ENCODE measurements at regions of chr4 and their contacts with region 1.

Region 1: DNA sequence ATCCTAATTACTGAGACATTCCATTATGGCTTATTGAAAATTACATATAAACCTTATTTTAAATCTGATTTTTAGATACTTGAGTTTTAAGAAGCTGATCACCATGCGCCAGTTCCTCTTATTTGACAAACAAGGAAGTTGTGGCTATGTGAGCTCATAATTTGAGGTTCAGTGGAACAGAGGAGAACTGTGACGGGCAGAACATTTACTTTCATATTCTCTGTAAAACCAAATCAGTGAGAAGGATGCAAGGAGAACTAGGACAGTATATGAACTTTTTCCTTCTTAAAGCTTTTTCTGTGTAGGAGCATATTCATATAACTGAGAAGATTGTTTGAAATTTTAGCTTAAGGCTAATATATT is 25.3 kb downstream of the STIM2 start:
- DNase-seq: peak; percentile 43
- H3K4me3 Mint-ChIP-seq: peak overlapping the region; percentile 69
- H3K27ac Mint-ChIP-seq: peak overlapping the region; percentile 91
- H3K4me1 Mint-ChIP-seq: peaks cover 77% of the 10 kb centered on the region
- H3K27me3 Mint-ChIP-seq: no peaks in the 10 kb centered on the region

Region 2: DNA sequence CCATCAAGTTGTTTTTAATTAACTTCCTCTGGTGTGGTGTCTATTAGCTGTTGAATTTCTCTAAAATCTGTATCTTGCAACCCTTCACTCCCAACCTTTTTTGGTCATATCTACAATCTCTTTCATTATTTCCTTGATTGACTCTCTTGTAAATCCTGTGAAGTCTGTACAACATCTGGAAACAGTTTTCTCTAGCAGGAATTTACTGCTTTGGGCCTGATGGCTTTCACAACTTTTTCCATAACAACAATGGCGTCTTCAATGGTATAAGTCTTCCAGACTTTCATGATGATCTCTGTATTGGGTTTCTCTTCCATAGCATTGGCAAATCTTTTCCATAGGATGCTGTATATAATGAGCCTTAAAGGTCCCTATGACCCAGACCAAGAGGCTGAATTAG is 253.0 kb before region 1 on chr4:
- intact Hi-C with region 1: no loop called
- DNase-seq: no peak
- H3K4me3 Mint-ChIP-seq: no peak overlapping the region
- H3K27ac Mint-ChIP-seq: no peak overlapping the region
- H3K4me1 Mint-ChIP-seq: no peaks in the 10 kb centered on the region
- H3K27me3 Mint-ChIP-seq: no peaks in the 10 kb centered on the region

Region 3: GRCh38 chr4:26812049-26812714 is 73.7 kb before region 1 on chr4:
- intact Hi-C with region 1: no loop called
- DNase-seq: no peak
- H3K4me3 Mint-ChIP-seq: no peak overlapping the region
- H3K27ac Mint-ChIP-seq: no peak overlapping the region
- H3K4me1 Mint-ChIP-seq: peaks cover 7% of the 10 kb centered on the region
- H3K27me3 Mint-ChIP-seq: no peaks in the 10 kb centered on the region

Region 4: DNA sequence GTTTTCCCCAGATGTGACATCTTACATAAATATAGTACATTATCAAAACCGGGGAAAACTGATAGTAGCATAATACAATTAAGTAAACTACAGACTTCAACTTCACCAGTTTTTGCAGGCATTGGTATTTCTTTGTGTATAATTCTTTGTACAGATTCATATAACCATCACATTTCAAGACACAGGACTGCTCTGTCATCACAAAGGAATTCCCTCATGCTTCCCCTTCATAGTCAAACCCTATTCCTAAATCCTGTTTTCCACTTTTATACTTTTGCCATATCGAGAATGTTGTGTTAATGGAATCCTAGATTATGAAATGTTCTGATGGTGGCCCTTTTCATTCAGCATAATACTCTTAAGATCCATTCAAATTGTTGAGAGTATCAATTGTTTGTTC is 10.7 kb after region 1 on chr4:
- intact Hi-C with region 1: loop called (anchors 1 kb)
- DNase-seq: no peak
- H3K4me3 Mint-ChIP-seq: no peak overlapping the region
- H3K27ac Mint-ChIP-seq: no peak overlapping the region
- H3K4me1 Mint-ChIP-seq: peaks cover 49% of the 10 kb centered on the region
- H3K27me3 Mint-ChIP-seq: no peaks in the 10 kb centered on the region

Region 5: GRCh38 chr4:26959654-26960047 is 73.8 kb after region 1 on chr4:
- intact Hi-C with region 1: loop called (anchors 1 kb)
- DNase-seq: no peak
- H3K4me3 Mint-ChIP-seq: no peak overlapping the region
- H3K27ac Mint-ChIP-seq: peak overlapping the region; percentile 18
- H3K4me1 Mint-ChIP-seq: peaks cover 46% of the 10 kb centered on the region
- H3K27me3 Mint-ChIP-seq: no peaks in the 10 kb centered on the region

Region 6: GRCh38 chr4:26992657-26993361 is 106.9 kb after region 1 on chr4:
- intact Hi-C with region 1: loop called (anchors 2 kb)
- DNase-seq: no peak
- H3K4me3 Mint-ChIP-seq: no peak overlapping the region
- H3K27ac Mint-ChIP-seq: no peak overlapping the region
- H3K4me1 Mint-ChIP-seq: peaks cover 24% of the 10 kb centered on the region
- H3K27me3 Mint-ChIP-seq: no peaks in the 10 kb centered on the region